ENCODE measurements at regions of chr2 and their contacts with region 1.

Region 1: DNA sequence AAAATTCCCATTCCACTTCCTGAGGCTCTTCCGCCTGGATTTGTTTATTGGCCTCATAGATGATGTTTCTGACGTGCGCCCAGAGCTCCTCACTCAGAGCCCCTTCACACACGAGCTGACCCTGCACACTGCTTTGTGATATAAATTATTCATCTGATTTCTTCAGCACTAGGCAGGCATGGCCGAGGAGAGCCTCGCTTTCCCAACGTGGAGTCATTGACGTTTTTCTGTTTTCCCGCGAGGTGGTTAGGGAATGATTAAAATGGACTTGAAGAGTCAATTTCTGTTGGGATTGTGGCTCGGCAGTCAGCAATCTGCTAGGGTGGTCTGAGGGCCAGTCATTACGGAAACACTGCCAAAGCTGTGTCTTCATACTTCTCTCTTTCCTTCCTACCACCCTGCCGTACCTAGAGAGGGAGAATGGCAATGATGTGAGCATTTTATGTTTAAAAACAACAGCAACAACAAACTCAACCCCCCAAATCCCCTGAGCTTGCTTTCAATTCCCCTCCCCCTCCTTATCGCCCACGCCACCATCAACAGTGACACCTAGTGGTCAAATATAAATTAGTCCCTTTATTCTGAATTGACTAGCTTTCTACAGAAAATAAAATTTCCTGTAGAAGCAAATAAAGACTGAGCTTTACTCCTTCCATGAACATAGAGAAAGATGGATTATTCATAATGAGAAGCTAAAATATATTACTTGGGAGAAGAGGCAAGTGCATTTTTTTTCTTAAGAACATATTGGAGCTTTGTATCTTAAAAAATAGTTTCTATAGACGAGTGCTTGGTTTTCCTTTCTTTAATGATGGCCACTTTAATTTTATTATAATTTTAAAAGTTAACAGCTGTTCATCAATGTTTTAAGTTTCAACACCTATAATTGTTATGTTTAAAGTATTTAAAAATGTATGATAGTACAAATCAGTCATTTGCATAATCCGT is 285.1 kb downstream of the MTX2 start:
- DNase-seq: peak; percentile 23
- H3K4me3 Mint-ChIP-seq: peak overlapping the region; percentile 48
- H3K27ac Mint-ChIP-seq: no peak overlapping the region
- H3K4me1 Mint-ChIP-seq: peaks cover 12% of the 10 kb centered on the region
- H3K27me3 Mint-ChIP-seq: peaks cover 47% of the 10 kb centered on the region

Region 2: DNA sequence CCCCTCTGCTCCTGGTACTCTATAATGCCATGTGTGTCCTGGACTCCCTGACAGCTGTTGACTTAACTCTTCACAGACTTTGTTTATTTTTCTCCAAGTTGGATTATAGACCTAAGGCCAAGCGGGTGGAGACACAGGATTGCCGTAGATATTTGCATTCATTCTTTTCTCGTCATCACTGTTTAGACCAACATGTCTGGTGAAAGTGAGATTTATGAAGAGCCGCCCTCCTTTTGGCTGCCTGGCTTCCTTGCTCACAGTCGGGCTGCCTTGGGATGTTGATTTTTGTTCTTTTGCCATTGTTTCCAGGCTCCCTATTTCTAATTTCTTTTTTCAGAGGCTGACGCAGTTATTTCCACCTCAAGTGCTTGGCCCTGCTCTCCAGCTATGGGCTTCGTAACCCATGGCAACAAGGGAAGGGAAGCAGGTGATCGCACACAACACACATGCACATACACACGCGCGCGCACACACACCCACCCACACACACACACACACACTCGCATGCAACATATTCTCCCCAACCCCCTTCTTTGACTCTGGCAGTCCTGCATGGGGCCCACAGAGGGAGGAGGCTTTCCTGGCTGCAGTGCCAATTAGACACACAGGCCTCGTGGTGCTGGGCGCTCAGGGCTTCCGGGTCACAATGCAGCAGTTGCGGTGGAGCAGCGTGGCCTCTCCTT is 11.4 kb after region 1 on chr2:
- CTCF ChIA-PET with region 1: interaction called, 13 read pairs
- POLR2A ChIA-PET with region 1: interaction called, 3 read pairs
- DNase-seq: no peak
- H3K4me3 Mint-ChIP-seq: no peak overlapping the region
- H3K27ac Mint-ChIP-seq: no peak overlapping the region
- H3K4me1 Mint-ChIP-seq: no peaks in the 10 kb centered on the region
- H3K27me3 Mint-ChIP-seq: peaks cover 41% of the 10 kb centered on the region